ENCODE measurements at regions of chr3 and their contacts with region 1.

Region 1: GRCh38 chr3:189512039-189512438 is 119.2 kb upstream of the TP63 start:
- DNase-seq: no peak
- ATAC-seq: no peak
- H3K4me3 ChIP-seq: no peak overlapping the region
- H3K27ac ChIP-seq: peak overlapping the region; percentile 82; the same call in 1 of the 2 replicates
- H3K4me1 ChIP-seq: peaks cover 21% of the 10 kb centered on the region
- H3K27me3 ChIP-seq: no peaks in the 10 kb centered on the region
- CTCF ChIP-seq: no peak

Region 2: GRCh38 chr3:189394599-189395121 is 117.4 kb before region 1 on chr3:
- CTCF ChIA-PET with region 1: no interaction called
- POLR2A ChIA-PET with region 1: no interaction called
- intact Hi-C with region 1: loop called (anchors 1 kb)
- DNase-seq: no peak
- ATAC-seq: no peak
- H3K4me3 ChIP-seq: no peak overlapping the region
- H3K27ac ChIP-seq: no peak overlapping the region
- H3K4me1 ChIP-seq: peaks cover 20% of the 10 kb centered on the region
- H3K27me3 ChIP-seq: no peaks in the 10 kb centered on the region
- CTCF ChIP-seq: no peak

Region 3: GRCh38 chr3:189756220-189757078 is 244.4 kb after region 1 on chr3:
- CTCF ChIA-PET with region 1: no interaction called
- POLR2A ChIA-PET with region 1: no interaction called
- intact Hi-C with region 1: loop called (anchors 2 kb)
- DNase-seq: peak; percentile 96
- ATAC-seq: peak; percentile 94
- H3K4me3 ChIP-seq: peak overlapping the region; percentile 23; the same call in 1 of the 2 replicates
- H3K27ac ChIP-seq: peak overlapping the region; percentile 48
- H3K4me1 ChIP-seq: peaks cover 32% of the 10 kb centered on the region
- H3K27me3 ChIP-seq: no peaks in the 10 kb centered on the region
- CTCF ChIP-seq: no peak

Region 4: DNA sequence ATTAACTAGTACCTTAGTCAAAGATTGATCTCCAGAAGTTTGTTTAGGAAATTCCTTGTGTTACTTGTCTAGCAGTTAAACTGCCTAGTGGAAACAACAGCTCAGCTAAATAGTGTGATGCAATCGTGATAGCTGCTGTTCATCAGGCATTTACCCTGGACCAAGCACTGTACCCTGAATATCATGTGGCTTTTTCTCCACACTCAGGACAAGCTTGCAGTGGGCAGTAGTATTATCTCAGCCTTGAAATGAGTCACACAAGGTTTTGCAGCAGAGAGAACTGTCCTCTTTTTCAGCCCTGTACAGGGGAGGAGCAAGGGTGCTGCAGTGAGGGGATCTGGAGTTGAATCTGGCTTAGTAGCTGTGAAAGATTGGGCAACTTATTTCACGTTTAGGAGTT is 327.5 kb after region 1 on chr3:
- CTCF ChIA-PET with region 1: no interaction called
- POLR2A ChIA-PET with region 1: no interaction called
- intact Hi-C with region 1: no loop called
- DNase-seq: peak; percentile 27
- ATAC-seq: no peak
- H3K4me3 ChIP-seq: no peak overlapping the region
- H3K27ac ChIP-seq: no peak overlapping the region
- H3K4me1 ChIP-seq: peaks cover 24% of the 10 kb centered on the region
- H3K27me3 ChIP-seq: no peaks in the 10 kb centered on the region
- CTCF ChIP-seq: no peak

Measured in PC-3 (cell line).